Mammary epithelial cell (primary cell): ENCODE measurements at regions of chr2 and their contacts with region 1.

Region 1: DNA sequence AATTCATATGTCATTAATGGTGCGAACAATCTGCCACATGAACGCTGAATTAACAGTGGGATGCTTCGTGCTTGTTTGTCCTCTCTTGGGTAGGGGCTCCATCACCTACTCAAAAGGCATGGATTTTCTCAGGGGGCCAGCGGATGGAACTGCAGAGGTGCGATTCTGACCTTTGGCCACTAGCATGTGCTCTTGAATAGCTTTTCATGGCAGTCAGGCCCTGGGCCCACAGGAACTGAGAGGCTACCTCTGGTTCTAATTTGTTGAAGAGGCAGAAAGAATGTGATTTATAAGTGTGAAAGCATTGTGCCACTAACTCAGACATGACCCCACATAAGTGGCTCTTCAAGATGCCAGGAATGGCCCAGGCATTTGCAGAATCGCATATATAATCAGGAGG is 283.2 kb downstream of the INSIG2 start:
- DNase-seq: peak; percentile 32
- H3K4me3 ChIP-seq: no peak overlapping the region
- H3K27ac ChIP-seq: no peak overlapping the region
- H3K4me1 ChIP-seq: no peaks in the 10 kb centered on the region
- H3K27me3 ChIP-seq: no peaks in the 10 kb centered on the region
- CTCF ChIP-seq: peak; percentile 96 to 98

Region 2: GRCh38 chr2:118216224-118216623 is 155.3 kb before region 1 on chr2:
- CTCF ChIA-PET with region 1: no interaction called
- dilution Hi-C with region 1: no loop called
- in situ Hi-C with region 1: no loop called
- intact Hi-C with region 1: no loop called
- DNase-seq: no peak
- H3K4me3 ChIP-seq: no peak overlapping the region
- H3K27ac ChIP-seq: no peak overlapping the region
- H3K4me1 ChIP-seq: no peaks in the 10 kb centered on the region
- H3K27me3 ChIP-seq: peaks cover 4% of the 10 kb centered on the region
- CTCF ChIP-seq: no peak

Region 3: GRCh38 chr2:118437501-118437900 is 66.0 kb after region 1 on chr2:
- CTCF ChIA-PET with region 1: no interaction called
- dilution Hi-C with region 1: loop called (anchors 5 kb)
- in situ Hi-C with region 1: no loop called
- intact Hi-C with region 1: no loop called
- DNase-seq: no peak
- H3K4me3 ChIP-seq: no peak overlapping the region
- H3K27ac ChIP-seq: no peak overlapping the region
- H3K4me1 ChIP-seq: peaks cover 17% of the 10 kb centered on the region
- H3K27me3 ChIP-seq: no peaks in the 10 kb centered on the region
- CTCF ChIP-seq: no peak

Region 4: GRCh38 chr2:118539290-118539689 is 167.8 kb after region 1 on chr2:
- CTCF ChIA-PET with region 1: no interaction called
- dilution Hi-C with region 1: no loop called
- in situ Hi-C with region 1: no loop called
- intact Hi-C with region 1: loop called (anchors 10 kb)
- DNase-seq: no peak
- H3K4me3 ChIP-seq: no peak overlapping the region
- H3K27ac ChIP-seq: no peak overlapping the region
- H3K4me1 ChIP-seq: no peaks in the 10 kb centered on the region
- H3K27me3 ChIP-seq: peaks cover under 1% of the 10 kb centered on the region
- CTCF ChIP-seq: peak; percentile 33 to 63

Region 5: DNA sequence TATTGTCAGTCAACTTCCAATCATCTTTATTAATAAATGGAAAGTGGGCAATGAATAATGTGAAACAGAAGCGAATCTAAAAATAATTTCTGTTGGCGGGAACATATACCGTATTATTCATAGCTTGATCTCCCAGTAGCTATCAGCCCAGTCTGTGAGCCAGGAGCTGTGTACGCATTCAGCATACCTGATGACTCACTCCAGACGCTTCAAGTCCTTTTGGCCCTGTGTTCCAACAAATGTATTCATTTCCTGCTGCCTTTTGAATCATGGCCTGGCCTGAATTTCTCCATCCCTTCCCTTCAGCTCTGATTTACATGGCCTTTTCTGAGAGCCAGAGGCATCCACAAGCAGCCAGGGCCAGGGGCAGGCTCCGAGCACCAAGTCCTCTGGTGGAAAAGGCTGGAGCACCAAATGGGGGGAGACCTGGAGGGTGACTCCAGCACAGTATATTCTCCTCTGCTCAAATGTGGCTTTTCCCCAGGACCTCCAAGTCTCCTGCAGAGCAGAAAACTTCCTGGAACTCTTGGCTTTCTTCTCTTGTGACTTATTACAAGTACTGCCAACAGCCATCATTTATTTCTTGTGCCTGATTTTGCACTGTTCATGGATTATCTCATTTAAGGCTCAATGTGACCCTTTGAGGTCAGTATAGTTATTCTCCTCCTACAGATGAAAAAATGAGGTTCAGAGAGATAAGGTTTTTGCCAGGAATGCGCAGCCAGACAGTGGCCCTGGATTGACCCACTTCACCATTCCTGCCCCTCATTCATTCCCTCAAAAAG is 367.2 kb after region 1 on chr2:
- CTCF ChIA-PET with region 1: no interaction called
- dilution Hi-C with region 1: no loop called
- in situ Hi-C with region 1: no loop called
- intact Hi-C with region 1: loop called (anchors 5 kb)
- DNase-seq: peak; percentile 93
- H3K4me3 ChIP-seq: no peak overlapping the region
- H3K27ac ChIP-seq: peak overlapping the region; percentile 63
- H3K4me1 ChIP-seq: peaks cover 14% of the 10 kb centered on the region
- H3K27me3 ChIP-seq: no peaks in the 10 kb centered on the region
- CTCF ChIP-seq: no peak